Posterior vena cava (tissue), 2 donors: ENCODE measurements at regions of chr10 and their contacts with region 1.

Region 1: DNA sequence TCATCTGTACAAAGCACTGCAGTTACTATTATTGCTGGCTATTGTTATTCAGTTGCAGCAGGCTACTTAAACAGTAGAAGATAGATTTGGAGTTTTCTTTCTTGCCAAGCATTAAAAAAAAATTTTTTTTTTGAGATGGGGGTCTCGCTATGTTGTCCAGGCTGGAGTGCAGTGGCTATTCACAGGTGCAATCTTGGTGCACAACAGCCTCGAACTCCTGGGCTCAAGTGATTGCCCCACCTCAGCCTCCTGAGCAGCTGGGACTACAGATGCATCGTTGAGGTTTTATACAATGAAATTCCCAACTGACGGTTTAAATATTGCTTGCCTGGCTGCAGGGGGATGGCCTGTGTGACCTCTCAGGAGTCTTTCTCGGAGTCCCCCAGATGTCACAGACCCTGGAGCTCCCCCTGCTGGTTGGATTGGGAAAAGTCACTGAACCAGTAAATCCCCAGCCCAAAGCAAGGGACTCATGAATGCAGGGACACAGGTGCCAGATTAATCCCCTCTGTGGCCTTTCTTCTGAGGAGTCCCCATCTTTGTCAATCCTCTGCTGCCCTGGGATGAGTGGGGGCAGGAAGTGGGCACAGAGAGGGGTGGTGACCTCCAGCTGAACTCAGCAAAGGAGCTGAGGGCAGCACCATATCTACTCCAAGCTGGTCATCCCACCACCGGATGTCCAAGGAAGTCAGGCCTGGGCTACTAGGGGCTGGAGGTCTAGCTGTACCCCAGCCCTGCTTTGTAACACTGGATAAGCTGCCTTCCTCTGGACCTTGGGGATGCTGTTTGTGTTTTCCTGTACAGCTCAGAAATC is 149.6 kb downstream of the C10orf105 start:
- DNase-seq: peak; percentile 86

Region 2: DNA sequence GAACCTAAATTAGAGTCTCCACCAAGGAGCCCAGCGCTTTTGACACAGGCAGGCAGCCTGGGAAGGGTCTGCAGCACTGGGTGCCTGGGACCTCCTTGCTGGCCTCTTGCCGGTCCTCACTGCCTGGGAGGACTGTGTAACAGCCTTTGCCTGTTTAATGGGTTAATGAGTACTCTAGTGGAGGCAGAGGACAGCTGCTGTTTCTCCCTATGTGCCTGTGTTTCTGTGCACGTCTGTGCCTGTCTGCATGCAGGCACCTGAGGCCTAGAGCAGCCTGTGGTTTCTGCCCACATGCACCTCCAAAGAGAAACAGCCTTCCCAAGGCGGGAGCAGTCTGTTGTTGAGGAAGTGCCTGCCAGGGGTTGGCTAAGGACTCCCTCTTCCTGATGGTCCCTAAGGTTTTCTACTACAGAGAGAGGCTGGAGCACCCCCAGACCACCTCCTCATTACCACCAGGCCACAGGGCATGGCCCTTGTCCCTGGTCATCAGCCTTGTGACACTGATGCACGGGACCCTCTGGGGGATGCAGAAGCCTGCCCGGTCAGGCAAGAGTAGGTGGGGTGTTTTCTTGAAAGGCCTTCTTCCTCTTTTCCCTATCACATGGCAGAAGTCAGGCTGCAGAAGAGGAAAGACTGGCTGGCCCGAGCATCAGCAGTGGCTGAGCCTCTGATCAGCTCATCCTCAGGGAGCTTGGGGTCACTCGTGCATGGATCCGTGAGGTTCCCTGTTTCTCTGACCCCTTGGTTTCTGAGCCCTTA is 236.7 kb before region 1 on chr10:
- intact Hi-C with region 1: loop called in 1 of 2 experiments (anchors 10 kb)
- DNase-seq: no peak